Activated B cell treated with CpG ODN at 0.5 μM for 24 hours (primary cell): ENCODE measurements at regions of chr19 and their contacts with region 1.

Region 1: DNA sequence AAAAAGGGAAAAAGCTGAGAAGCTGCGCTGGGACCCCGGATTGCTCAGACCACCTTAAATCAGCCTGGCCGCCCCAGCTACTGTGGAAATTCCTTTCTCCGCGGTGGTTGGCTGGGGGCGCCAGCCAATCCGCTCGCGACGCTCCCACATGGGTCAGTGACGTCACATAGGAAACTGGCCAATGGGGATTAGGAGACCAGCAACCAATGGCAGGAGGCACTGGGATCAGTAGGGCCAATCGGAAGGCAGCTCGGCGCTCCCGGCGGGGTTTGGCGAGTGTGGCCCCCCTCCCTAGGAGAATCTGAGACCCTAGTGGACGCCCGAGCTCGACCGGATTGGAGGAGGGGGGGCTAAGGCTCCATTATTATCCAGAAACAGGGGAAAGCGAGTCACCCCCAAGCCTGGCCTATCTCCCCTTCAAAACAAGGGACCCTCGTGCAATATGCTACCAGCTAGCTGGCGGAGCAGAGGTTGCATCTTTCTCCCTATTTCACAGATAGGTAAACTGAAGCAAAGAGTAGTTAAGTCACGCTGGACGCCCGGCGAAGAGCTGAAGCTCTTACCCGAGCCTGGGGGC is 6.5 kb upstream of the TLE2 start:
- DNase-seq: peak; percentile 82
- ATAC-seq: peak; percentile 93
- H3K4me3 Mint-ChIP-seq: peak overlapping the region; percentile 90
- H3K27ac Mint-ChIP-seq: peak overlapping the region; percentile 88
- H3K4me1 Mint-ChIP-seq: peaks cover 17% of the 10 kb centered on the region
- H3K27me3 Mint-ChIP-seq: peaks cover 11% of the 10 kb centered on the region
- CTCF ChIP-seq: no peak

Region 2: GRCh38 chr19:2977001-2977685 is 58.5 kb before region 1 on chr19 and contains the start of gene TLE6:
- CTCF ChIA-PET with region 1: no interaction called
- POLR2A ChIA-PET with region 1: interaction called, 23 read pairs
- intact Hi-C with region 1: loop called (anchors 2 kb)
- DNase-seq: peak; percentile 83
- ATAC-seq: peak; percentile 98
- H3K4me3 Mint-ChIP-seq: peak within 1 kb of the TSS; percentile 91
- H3K27ac Mint-ChIP-seq: peak within 1 kb of the TSS; percentile 81
- H3K4me1 Mint-ChIP-seq: peaks cover 22% of the 10 kb centered on the region
- H3K27me3 Mint-ChIP-seq: peaks cover 8% of the 10 kb centered on the region
- CTCF ChIP-seq: no peak
- total RNA-seq, gene TLE6: 0.42 and 0.93 TPM in 2 replicates

Region 3: GRCh38 chr19:3053218-3053699 is 17.6 kb after region 1 on chr19:
- CTCF ChIA-PET with region 1: no interaction called
- POLR2A ChIA-PET with region 1: interaction called, 18 read pairs
- intact Hi-C with region 1: no loop called
- DNase-seq: no peak
- ATAC-seq: peak; percentile 23
- H3K4me3 Mint-ChIP-seq: no peak overlapping the region
- H3K27ac Mint-ChIP-seq: no peak overlapping the region
- H3K4me1 Mint-ChIP-seq: peaks cover 18% of the 10 kb centered on the region
- H3K27me3 Mint-ChIP-seq: no peaks in the 10 kb centered on the region
- CTCF ChIP-seq: no peak

Region 4: DNA sequence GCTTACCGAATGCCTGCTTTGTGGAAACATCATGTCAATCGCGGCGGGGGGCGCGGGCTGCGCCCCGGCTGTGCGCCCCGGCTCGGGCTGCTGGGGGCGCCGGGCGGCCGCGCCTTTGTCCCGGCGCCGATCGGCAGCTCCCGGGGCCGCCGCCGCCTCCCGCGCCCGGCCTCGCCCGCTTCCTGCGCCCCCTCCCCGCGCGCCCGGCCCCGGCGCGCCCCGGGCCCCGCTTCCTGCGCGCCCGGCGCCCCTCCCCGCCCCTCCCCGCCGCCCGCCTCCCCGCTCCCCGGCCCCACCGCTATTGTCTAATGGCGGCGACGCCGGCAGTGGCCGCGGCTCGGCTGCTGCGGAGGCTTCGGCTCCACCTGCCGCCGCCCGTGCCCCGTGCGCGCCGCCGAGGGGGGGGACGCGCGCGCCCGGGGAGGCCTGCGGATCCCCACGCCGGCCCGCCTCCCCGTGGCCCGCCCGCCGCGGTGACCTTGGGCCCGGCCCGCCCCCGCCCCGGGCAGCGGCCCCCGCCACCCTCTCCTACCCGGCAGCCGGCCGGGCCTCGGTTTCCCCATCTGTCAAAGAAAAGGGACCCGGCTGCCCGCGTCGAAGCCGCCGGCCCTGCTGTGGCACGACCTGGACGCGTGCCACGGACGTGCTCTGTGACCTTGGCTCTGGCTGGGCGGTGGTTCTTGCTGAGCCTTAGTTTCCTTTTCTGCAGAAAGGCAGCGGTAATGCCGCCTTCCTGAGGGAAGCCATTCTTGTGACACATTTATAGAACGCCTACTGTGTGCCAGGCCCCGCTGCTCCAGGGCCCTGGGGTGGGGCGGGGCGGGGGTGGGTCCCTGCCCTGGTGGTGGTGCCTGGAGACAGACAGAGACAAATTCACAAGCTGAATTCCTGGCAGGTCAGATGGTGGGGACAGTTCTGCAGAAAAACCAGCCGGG is 26.8 kb after region 1 on chr19 and contains the start of gene TLE5:
- CTCF ChIA-PET with region 1: no interaction called
- POLR2A ChIA-PET with region 1: interaction called, 28 read pairs
- intact Hi-C with region 1: loop called (anchors 1 kb)
- DNase-seq: peak; percentile 76
- ATAC-seq: peak; percentile 43
- H3K4me3 Mint-ChIP-seq: peak within 1 kb of the TSS; percentile 84
- H3K27ac Mint-ChIP-seq: peak within 1 kb of the TSS; percentile 89
- H3K4me1 Mint-ChIP-seq: peaks cover 65% of the 10 kb centered on the region
- H3K27me3 Mint-ChIP-seq: no peaks in the 10 kb centered on the region
- CTCF ChIP-seq: no peak
- total RNA-seq, gene TLE5: 323 TPM in 2 replicates